Right ventricle myocardium inferior (tissue), 1 donor: ENCODE measurements at regions of chr7 and their contacts with region 1.

Region 1: GRCh38 chr7:27160546-27161213 is 4.2 kb upstream of the HOXA7 start:
- DNase-seq: peak; percentile 94
- ATAC-seq: peak; percentile 81

Region 2: GRCh38 chr7:25886387-25887240 is 1274.1 kb before region 1 on chr7:
- intact Hi-C with region 1: loop called (anchors 10 kb)
- DNase-seq: no peak
- ATAC-seq: peak; percentile 66

Region 3: GRCh38 chr7:26681819-26682418 is 478.8 kb before region 1 on chr7:
- intact Hi-C with region 1: loop called (anchors 2 kb)
- DNase-seq: no peak
- ATAC-seq: no peak